CD4-positive, alpha-beta T cell (primary cell): ENCODE measurements at regions of chr10 and their contacts with region 1.

Region 1: DNA sequence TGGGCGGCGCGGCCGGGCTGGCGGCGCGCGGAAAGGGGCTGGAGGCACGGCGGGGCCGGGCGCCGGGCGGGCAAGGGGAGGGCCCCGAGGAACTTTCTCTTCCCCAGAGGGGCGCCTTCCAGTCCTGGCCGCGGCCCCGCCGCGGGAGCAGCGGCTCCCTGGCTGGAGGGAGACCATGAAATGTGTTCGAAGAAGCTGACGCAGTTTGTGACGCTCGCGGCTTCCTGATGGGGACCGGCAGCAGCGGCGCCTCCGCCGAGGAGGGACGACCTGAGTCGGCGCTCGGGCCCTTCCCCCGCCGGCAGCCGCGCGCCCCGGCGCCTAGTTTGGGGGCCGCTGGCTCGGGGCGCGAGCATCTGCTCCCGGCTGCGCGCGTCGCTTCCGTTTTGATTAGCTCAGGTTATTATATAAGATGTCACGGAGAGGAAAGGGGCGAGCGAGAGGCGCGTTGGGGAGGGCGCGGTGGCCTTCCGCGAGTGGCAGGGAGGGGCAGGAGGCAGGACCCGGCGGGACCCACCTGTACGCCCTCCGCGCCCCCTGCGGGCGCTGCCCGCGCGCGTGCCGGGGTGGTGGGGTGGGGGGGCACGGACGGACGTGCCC is 57.1 kb upstream of the PCGF5 start:
- DNase-seq: peak; percentile 61 to 94 (median 76)
- ATAC-seq: peak; percentile 71
- H3K4me3 ChIP-seq: peak overlapping the region; percentile 82
- H3K4me3 Mint-ChIP-seq: peak overlapping the region; percentile 98
- H3K27ac ChIP-seq: peak overlapping the region; percentile 79 to 87
- H3K27ac Mint-ChIP-seq: peak overlapping the region; percentile 98
- H3K4me1 ChIP-seq: peaks cover 19% of the 10 kb centered on the region
- H3K4me1 Mint-ChIP-seq: peaks cover 56% of the 10 kb centered on the region
- H3K27me3 ChIP-seq: no peaks in the 10 kb centered on the region
- H3K27me3 Mint-ChIP-seq: no peaks in the 10 kb centered on the region
- CTCF ChIP-seq: no peak

Region 2: GRCh38 chr10:90712534-90712933 is 450.8 kb before region 1 on chr10:
- CTCF ChIA-PET with region 1: no interaction called
- POLR2A ChIA-PET with region 1: no interaction called
- intact Hi-C with region 1: no loop called
- DNase-seq: no peak
- ATAC-seq: no peak
- H3K4me3 ChIP-seq: no peak overlapping the region
- H3K4me3 Mint-ChIP-seq: no peak overlapping the region
- H3K27ac ChIP-seq: no peak overlapping the region
- H3K27ac Mint-ChIP-seq: no peak overlapping the region
- H3K4me1 ChIP-seq: no peaks in the 10 kb centered on the region
- H3K4me1 Mint-ChIP-seq: no peaks in the 10 kb centered on the region
- H3K27me3 ChIP-seq: no peaks in the 10 kb centered on the region
- H3K27me3 Mint-ChIP-seq: peaks cover 12% of the 10 kb centered on the region
- CTCF ChIP-seq: no peak

Region 3: GRCh38 chr10:90871766-90872647 is 291.4 kb before region 1 on chr10 and contains the start of gene RPP30:
- CTCF ChIA-PET with region 1: no interaction called
- POLR2A ChIA-PET with region 1: interaction called, 4 read pairs
- intact Hi-C with region 1: loop called in 1 of 2 experiments (anchors 5 kb)
- DNase-seq: peak; percentile 67 to 88 (median 74)
- ATAC-seq: peak; percentile 98
- H3K4me3 ChIP-seq: peak within 1 kb of the TSS; percentile 95
- H3K4me3 Mint-ChIP-seq: peak within 1 kb of the TSS; percentile 96
- H3K27ac ChIP-seq: peak within 1 kb of the TSS; percentile 31 to 46
- H3K27ac Mint-ChIP-seq: peak within 1 kb of the TSS; percentile 84
- H3K4me1 ChIP-seq: peaks cover 16% of the 10 kb centered on the region
- H3K4me1 Mint-ChIP-seq: peaks cover 38% of the 10 kb centered on the region
- H3K27me3 ChIP-seq: peaks cover 0 to 22% of the 10 kb centered on the region in 2 experiments
- H3K27me3 Mint-ChIP-seq: peaks cover 33% of the 10 kb centered on the region
- CTCF ChIP-seq: no peak
- total RNA-seq, gene RPP30: 25.3 to 28.5 TPM

Region 4: GRCh38 chr10:91185239-91185875 is 22.0 kb after region 1 on chr10:
- CTCF ChIA-PET with region 1: no interaction called
- POLR2A ChIA-PET with region 1: interaction called, 11 read pairs
- intact Hi-C with region 1: no loop called
- DNase-seq: no peak
- ATAC-seq: no peak
- H3K4me3 ChIP-seq: no peak overlapping the region
- H3K4me3 Mint-ChIP-seq: no peak overlapping the region
- H3K27ac ChIP-seq: no peak overlapping the region
- H3K27ac Mint-ChIP-seq: peak overlapping the region; percentile 9
- H3K4me1 ChIP-seq: peaks cover 20% of the 10 kb centered on the region
- H3K4me1 Mint-ChIP-seq: peaks cover 89% of the 10 kb centered on the region
- H3K27me3 ChIP-seq: no peaks in the 10 kb centered on the region
- H3K27me3 Mint-ChIP-seq: no peaks in the 10 kb centered on the region
- CTCF ChIP-seq: no peak

Region 5: GRCh38 chr10:91220194-91220953 is 57.0 kb after region 1 on chr10 and contains the start of gene PCGF5:
- CTCF ChIA-PET with region 1: interaction called, 16 read pairs
- POLR2A ChIA-PET with region 1: interaction called, 63 read pairs
- intact Hi-C with region 1: loop called (anchors 1 to 2 kb)
- DNase-seq: peak; percentile 81 to 96 (median 91)
- ATAC-seq: peak; percentile 94
- H3K4me3 ChIP-seq: peak within 1 kb of the TSS; percentile 59
- H3K4me3 Mint-ChIP-seq: peak within 1 kb of the TSS; percentile 89
- H3K27ac ChIP-seq: peak within 1 kb of the TSS in 1 of 2 donors; percentile 65
- H3K27ac Mint-ChIP-seq: peak within 1 kb of the TSS; percentile 84
- H3K4me1 ChIP-seq: peaks cover 21% of the 10 kb centered on the region
- H3K4me1 Mint-ChIP-seq: peaks cover 44% of the 10 kb centered on the region
- H3K27me3 ChIP-seq: no peaks in the 10 kb centered on the region
- H3K27me3 Mint-ChIP-seq: no peaks in the 10 kb centered on the region
- CTCF ChIP-seq: no peak
- total RNA-seq, gene PCGF5: 57.7 to 58.4 TPM

Region 6: DNA sequence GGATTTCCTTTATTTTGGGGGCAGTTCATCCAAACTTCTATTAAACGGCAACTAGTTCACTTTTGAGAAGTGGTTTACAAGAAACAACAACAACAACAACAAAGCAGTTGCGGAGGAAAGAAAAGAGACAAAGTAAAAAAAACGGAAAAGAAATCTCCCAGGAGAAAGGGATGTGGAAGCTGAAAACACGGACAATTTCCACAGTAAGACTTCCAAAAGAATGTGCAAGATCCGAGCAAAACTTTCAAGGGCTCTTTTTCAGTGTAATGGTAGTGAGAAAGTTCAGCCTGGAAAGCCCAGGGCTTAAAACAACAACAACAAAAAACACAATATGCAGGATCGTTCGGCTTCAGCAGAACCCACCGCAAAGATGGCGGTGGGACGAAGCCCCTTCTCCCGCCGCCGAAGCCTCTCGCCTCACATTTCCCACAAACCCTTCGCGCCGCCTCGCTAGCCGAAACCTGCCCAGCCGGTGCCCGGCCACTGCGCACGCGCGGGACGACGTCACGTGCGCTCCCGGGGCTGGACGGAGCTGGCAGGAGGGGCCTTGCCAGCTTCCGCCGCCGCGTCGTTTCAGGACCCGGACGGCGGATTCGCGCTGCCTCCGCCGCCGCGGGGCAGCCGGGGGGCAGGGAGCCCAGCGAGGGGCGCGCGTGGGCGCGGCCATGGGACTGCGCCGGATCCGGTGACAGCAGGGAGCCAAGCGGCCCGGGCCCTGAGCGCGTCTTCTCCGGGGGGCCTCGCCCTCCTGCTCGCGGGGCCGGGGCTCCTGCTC is 634.7 kb after region 1 on chr10 and contains the start of gene TNKS2:
- CTCF ChIA-PET with region 1: no interaction called
- POLR2A ChIA-PET with region 1: interaction called, 5 read pairs
- intact Hi-C with region 1: loop called in 1 of 2 experiments (anchors 5 kb)
- DNase-seq: peak; percentile 83 to 96 (median 91)
- ATAC-seq: peak; percentile 73
- H3K4me3 ChIP-seq: peak within 1 kb of the TSS; percentile 93
- H3K4me3 Mint-ChIP-seq: peak within 1 kb of the TSS; percentile 98
- H3K27ac ChIP-seq: peak within 1 kb of the TSS; percentile 72 to 90
- H3K27ac Mint-ChIP-seq: peak within 1 kb of the TSS; percentile 97
- H3K4me1 ChIP-seq: peaks cover 20% of the 10 kb centered on the region
- H3K4me1 Mint-ChIP-seq: peaks cover 69% of the 10 kb centered on the region
- H3K27me3 ChIP-seq: no peaks in the 10 kb centered on the region
- H3K27me3 Mint-ChIP-seq: no peaks in the 10 kb centered on the region
- CTCF ChIP-seq: no peak
- total RNA-seq, gene TNKS2: 47.8 to 50.4 TPM